ENCODE measurements at regions of chrX and their contacts with region 1.

Region 1: DNA sequence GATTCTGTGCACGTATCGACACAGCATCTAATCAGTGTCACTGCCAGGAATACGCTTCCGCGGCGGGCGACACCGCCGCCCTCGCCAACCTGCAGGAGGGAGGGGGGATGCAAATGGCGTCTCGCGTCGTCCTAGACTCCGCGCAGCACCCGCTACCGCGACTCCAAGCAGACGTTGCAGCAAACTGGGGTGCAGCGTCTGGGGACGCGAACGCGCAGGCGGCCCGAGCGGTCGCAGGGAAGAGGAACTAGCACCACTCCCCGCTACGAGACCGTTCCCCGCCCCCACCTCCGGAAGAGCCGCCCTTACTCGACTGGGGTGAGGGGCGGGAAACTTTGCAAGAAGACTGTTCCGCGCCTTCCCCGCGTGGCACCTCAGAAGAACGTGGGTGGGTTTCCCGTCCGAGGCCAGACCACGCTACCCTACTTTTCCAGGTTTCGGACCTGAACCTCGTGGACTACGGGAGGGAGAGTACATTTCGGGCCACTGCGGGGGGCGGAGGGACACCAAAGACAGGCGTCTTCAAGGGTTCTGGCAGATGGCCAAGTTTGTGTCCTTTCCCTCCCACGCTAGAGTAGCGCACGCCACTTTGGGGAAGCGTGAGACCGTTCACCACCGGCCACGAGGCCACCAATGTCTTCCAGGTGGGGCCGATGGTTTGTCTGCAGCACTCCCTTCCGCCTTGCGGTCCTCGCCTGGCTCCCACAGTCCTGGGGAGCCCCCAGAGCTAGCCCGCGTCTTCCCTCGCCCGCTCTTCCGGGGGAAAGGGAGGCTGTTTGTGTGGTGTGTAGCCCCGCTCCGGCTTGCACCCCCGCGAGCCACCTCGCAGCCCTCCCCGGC is 78.0 kb upstream of the BCOR start:
- DNase-seq: no peak
- ATAC-seq: peak; percentile 50
- H3K4me3 ChIP-seq: peak overlapping the region; percentile 61
- H3K27ac ChIP-seq: peak overlapping the region; percentile 96
- H3K4me1 ChIP-seq: 0 out of 2 replicates have a peak, but pooled peaks cover 9% of the 10 kb centered on the region
- H3K27me3 ChIP-seq: no peaks in the 10 kb centered on the region
- CTCF ChIP-seq: no peak
- EP300 ChIP-seq: 0 out of 4 replicates have a peak, but pooled peaks of 1 of the 2 experiments have one; percentile 9
- POLR2A ChIP-seq: peak; percentile 85
- RAD21 ChIP-seq: no peak

Region 2: GRCh38 chrX:40013266-40014195 is 162.2 kb before region 1 on chrX:
- CTCF ChIA-PET with region 1: no interaction called
- POLR2A ChIA-PET with region 1: no interaction called
- RAD21 ChIA-PET with region 1: no interaction called
- SMC1A ChIA-PET with region 1: no interaction called
- in situ Hi-C with region 1: no loop called
- intact Hi-C with region 1: loop called (anchors 5 kb)
- DNase-seq: no peak
- ATAC-seq: peak; percentile 69
- H3K4me3 ChIP-seq: peak overlapping the region; percentile 57; the same call in 1 of the 2 replicates
- H3K27ac ChIP-seq: peak overlapping the region; percentile 42
- H3K4me1 ChIP-seq: peaks cover 5% of the 10 kb centered on the region; the same call in 1 of the 2 replicates
- H3K27me3 ChIP-seq: no peaks in the 10 kb centered on the region
- CTCF ChIP-seq: no peak
- EP300 ChIP-seq: no peak
- POLR2A ChIP-seq: peak; percentile 50; the same call in 1 of the 2 replicates
- RAD21 ChIP-seq: no peak

Region 3: GRCh38 chrX:40132751-40133150 is 43.0 kb before region 1 on chrX:
- CTCF ChIA-PET with region 1: no interaction called
- POLR2A ChIA-PET with region 1: no interaction called
- RAD21 ChIA-PET with region 1: no interaction called
- SMC1A ChIA-PET with region 1: no interaction called
- in situ Hi-C with region 1: no loop called
- intact Hi-C with region 1: no loop called
- DNase-seq: no peak
- ATAC-seq: no peak
- H3K4me3 ChIP-seq: no peak overlapping the region
- H3K27ac ChIP-seq: no peak overlapping the region
- H3K4me1 ChIP-seq: no peaks in the 10 kb centered on the region
- H3K27me3 ChIP-seq: no peaks in the 10 kb centered on the region; a peak in 1 of 4 replicates
- CTCF ChIP-seq: no peak
- EP300 ChIP-seq: no peak
- POLR2A ChIP-seq: no peak
- RAD21 ChIP-seq: no peak